ENCODE measurements at regions of chr17 and their contacts with region 1.

Region 1: GRCh38 chr17:1137465-1137894 is 42.3 kb downstream of the ABR start:
- DNase-seq: no peak
- H3K4me3 ChIP-seq: no peak overlapping the region
- H3K27ac ChIP-seq: no peak overlapping the region
- H3K4me1 ChIP-seq: peaks cover 28 to 66% (median 45%) of the 10 kb centered on the region in 4 donors
- H3K27me3 ChIP-seq: no peaks in the 10 kb centered on the region
- CTCF ChIP-seq: no peak
- EP300 ChIP-seq: no peak
- POLR2A ChIP-seq: no peak

Region 2: GRCh38 chr17:1039511-1040215 is 97.8 kb before region 1 on chr17:
- intact Hi-C with region 1: no loop called
- DNase-seq: peak; percentile 94
- H3K4me3 ChIP-seq: peak overlapping the region in 3 of 4 donors; percentile 17 to 35 (median 20)
- H3K27ac ChIP-seq: peak overlapping the region; percentile 49 to 79 (median 72)
- H3K4me1 ChIP-seq: peaks cover 52 to 68% (median 59%) of the 10 kb centered on the region in 4 donors
- H3K27me3 ChIP-seq: no peaks in the 10 kb centered on the region
- CTCF ChIP-seq: no peak
- EP300 ChIP-seq: no peak
- POLR2A ChIP-seq: no peak

Region 3: GRCh38 chr17:1179818-1180742 is 42.6 kb after region 1 on chr17 and contains the start of gene ABR:
- intact Hi-C with region 1: loop called (anchors 5 kb)
- DNase-seq: no peak
- H3K4me3 ChIP-seq: peak within 1 kb of the TSS; percentile 72 to 92 (median 81)
- H3K27ac ChIP-seq: peak within 1 kb of the TSS; percentile 71 to 80 (median 77)
- H3K4me1 ChIP-seq: peaks cover 48 to 62% (median 56%) of the 10 kb centered on the region in 4 donors
- H3K27me3 ChIP-seq: no peaks in the 10 kb centered on the region
- CTCF ChIP-seq: no peak
- EP300 ChIP-seq: no peak
- POLR2A ChIP-seq: no peak
- total RNA-seq, gene ABR: 98.4 to 142 (median 114) TPM